Gastrocnemius medialis (tissue), 4 donors: ENCODE measurements at regions of chr1 and their contacts with region 1.

Region 1: DNA sequence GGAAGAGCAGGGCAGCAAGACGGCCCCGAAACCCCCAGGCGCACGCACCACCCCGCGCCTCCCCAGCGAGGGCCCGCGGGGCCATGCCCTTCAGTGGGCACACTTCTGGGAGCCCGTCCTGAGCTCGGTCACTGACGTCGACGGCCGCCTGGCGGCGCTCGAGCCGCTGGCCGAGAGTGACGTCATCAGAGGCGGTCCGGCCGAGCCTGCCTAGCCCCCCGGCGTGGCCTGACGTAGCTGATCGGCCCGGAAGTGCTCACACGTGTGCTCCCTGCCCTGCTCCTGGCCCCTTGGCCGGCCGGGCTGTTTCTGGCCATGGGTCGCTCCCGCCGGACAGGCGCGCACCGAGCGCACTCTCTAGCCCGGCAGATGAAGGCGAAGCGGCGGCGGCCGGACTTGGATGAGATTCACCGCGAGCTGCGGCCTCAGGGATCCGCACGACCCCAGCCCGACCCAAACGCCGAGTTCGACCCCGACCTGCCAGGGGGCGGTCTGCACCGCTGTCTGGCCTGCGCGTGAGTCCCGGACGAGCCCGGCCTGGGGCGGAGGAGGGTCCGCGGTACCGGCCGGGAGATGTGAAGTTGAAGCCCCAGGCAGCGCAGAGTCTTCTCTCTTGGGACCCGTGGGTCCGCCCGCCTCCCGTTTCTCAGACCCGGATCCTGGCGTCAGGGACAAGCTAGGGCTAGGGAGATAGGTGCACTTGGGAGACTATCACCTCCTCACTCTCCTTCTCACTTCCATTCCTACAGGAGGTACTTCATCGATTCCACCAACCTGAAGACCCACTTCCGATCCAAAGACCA is at the start of gene ZNF593:
- DNase-seq: peak; percentile 91
- ATAC-seq: peak; percentile 91 to 93
- H3K4me3 ChIP-seq: peak within 1 kb of the TSS; percentile 73 to 99 (median 86)
- H3K27ac ChIP-seq: peak within 1 kb of the TSS; percentile 88 to 97 (median 92)
- H3K4me1 ChIP-seq: peaks cover 20 to 26% of the 10 kb centered on the region in 2 donors
- H3K27me3 ChIP-seq: no peaks in the 10 kb centered on the region
- CTCF ChIP-seq: peak; percentile 93 to 97 (median 95)
- POLR2A ChIP-seq: peak; percentile 85 to 91
- total RNA-seq, gene ZNF593: 39.6 to 135 (median 97.3) TPM

Region 2: DNA sequence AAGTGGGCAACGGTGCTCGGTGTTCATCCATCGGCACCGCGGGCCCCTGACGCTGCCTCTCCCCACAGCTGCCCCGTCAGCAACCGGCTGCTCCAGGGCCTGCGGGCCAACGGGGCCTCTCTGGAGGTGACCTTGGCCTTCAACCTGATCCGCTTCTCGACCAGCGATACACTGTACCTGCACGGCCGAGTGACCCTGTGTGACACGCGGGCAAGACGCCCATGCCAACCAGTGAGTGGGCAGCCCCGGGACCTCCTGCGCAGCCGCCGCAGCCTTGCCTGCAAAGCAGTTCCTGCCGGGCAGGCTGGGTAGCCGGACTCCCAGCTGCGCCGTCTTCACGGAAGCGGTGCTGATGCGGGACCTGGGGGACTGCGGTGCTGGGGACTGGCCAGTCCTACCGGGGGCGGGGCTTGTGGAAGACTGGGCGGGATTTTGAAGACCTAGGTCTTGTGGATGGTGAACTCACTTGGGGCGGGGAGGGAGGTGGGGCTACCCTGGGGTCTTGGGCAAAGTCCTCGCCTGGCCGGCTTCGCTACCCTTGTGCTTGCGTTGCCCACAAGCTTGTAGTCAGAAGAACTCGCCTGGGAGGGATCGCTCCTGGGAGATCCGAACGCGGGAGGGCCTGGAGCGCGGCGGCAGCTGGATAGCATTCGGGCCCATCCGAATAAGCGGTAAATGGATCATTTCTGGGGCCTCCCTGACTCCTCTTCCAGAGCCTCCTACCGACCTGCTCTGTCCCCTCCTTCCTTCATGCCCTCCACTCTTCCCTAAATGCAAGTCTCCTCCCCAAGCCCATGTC is 55.4 kb after region 1 on chr1:
- in situ Hi-C with region 1: loop called in 2 of 4 experiments (anchors 5 kb)
- intact Hi-C with region 1: no loop called
- DNase-seq: peak; percentile 27 to 80
- ATAC-seq: peak; percentile 69 to 84
- H3K4me3 ChIP-seq: peak overlapping the region; percentile 59 to 67 (median 60)
- H3K27ac ChIP-seq: peak overlapping the region; percentile 29 to 66 (median 63)
- H3K4me1 ChIP-seq: peaks cover 0 to 7% of the 10 kb centered on the region in 2 donors
- H3K27me3 ChIP-seq: no peaks in the 10 kb centered on the region
- CTCF ChIP-seq: no peak
- POLR2A ChIP-seq: peak in 1 of 2 donors; percentile 22